A549 (cell line): ENCODE measurements at regions of chr10 and their contacts with region 1.

Region 1: GRCh38 chr10:103852189-103852711 is 3.1 kb downstream of the SH3PXD2A start:
- DNase-seq: no peak
- ATAC-seq: no peak
- H3K4me3 ChIP-seq: no peak overlapping the region
- H3K27ac ChIP-seq: no peak overlapping the region
- H3K4me1 ChIP-seq: peaks cover 12% of the 10 kb centered on the region
- CTCF ChIP-seq: no peak
- EP300 ChIP-seq: no peak
- POLR2A ChIP-seq: no peak
- RAD21 ChIP-seq: no peak

Region 2: GRCh38 chr10:103839872-103840746 is 12.1 kb before region 1 on chr10:
- CTCF ChIA-PET with region 1: interaction called, 10 read pairs
- POLR2A ChIA-PET with region 1: no interaction called
- DNase-seq: no peak
- ATAC-seq: no peak
- H3K4me3 ChIP-seq: no peak overlapping the region
- H3K27ac ChIP-seq: no peak overlapping the region; a peak in 1 of 6 replicates
- H3K4me1 ChIP-seq: peaks cover 13% of the 10 kb centered on the region
- CTCF ChIP-seq: no peak
- EP300 ChIP-seq: no peak
- POLR2A ChIP-seq: no peak
- RAD21 ChIP-seq: no peak

Region 3: DNA sequence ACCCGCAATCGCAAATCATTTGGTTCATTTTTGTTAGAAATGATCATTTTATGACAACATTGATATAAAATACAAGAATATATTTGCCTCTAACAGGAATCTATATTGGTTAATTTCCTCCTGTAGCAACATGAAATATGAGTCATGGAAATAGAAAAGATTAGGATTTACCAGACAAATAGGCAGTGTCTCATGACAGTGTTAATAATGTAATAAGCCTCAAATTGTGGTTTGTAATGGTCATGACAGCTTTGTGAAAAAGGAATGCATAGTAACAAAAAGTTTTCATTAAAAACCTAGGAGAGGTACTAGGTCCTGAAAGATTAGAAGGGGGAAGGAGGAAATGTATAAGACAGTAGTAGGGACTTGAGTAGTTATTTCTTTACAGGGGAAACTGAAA is 106.7 kb after region 1 on chr10:
- CTCF ChIA-PET with region 1: no interaction called
- POLR2A ChIA-PET with region 1: no interaction called
- DNase-seq: no peak
- ATAC-seq: no peak
- H3K4me3 ChIP-seq: no peak overlapping the region
- H3K27ac ChIP-seq: no peak overlapping the region
- H3K4me1 ChIP-seq: no peaks in the 10 kb centered on the region
- CTCF ChIP-seq: no peak
- EP300 ChIP-seq: no peak
- POLR2A ChIP-seq: no peak
- RAD21 ChIP-seq: no peak